ENCODE measurements at regions of chr18 and their contacts with region 1.

Region 1: DNA sequence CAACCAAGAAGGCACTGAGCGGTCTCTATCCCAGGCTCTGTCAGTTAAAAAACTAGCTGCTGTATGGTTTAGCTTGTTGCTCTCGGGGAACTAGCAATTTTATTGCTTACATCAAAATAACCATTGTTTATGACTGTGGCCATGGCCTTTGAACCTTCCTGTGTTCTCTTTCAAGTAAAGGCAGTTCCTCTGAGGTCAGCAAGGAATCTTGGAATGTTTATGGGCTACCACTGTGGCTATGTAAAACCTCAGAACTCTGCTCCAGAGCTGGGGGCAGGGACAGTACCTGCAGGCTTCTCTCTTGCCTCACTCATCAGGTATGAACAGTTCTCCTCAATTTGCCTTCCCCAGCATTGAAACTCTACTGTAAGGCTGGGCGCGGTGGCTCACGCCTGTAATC is 416.0 kb upstream of the NETO1 start:
- DNase-seq: peak; percentile 97
- ATAC-seq: peak; percentile 68
- H3K4me3 ChIP-seq: peak overlapping the region; percentile 57
- H3K27ac ChIP-seq: peak overlapping the region; percentile 99
- H3K4me1 ChIP-seq: peaks cover 49% of the 10 kb centered on the region
- H3K27me3 ChIP-seq: no peaks in the 10 kb centered on the region
- CTCF ChIP-seq: no peak

Region 2: DNA sequence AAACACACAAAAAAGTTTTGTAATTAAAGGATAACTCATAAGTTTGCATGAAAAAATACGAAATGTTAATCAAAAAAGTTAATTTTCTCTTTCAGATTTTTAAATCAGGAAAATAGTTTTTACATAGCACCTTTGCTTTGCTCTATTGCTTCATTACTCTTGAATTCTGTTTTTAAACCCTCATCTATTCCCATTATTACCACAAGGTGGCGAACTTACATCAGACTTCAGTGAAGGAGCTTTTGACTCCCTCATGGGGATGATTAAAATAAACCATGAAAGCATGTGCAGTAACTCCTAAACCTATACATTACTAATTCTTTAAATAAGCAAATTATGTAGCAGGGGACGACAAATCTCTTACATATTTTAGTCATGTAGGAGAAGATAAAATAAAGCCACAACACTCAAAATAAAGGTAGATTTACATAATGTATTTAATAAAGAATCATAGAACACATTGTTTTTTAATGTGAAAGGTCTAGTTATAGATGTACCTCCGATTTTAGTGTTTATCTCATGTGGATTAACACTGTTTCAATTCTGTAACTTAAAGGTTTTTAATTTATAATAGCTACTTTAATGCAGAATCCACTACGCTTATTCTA is 521.2 kb before region 1 on chr18:
- CTCF ChIA-PET with region 1: no interaction called
- POLR2A ChIA-PET with region 1: no interaction called
- intact Hi-C with region 1: loop called (anchors 2 kb)
- DNase-seq: peak; percentile 84
- ATAC-seq: peak; percentile 61
- H3K4me3 ChIP-seq: no peak overlapping the region
- H3K27ac ChIP-seq: no peak overlapping the region
- H3K4me1 ChIP-seq: no peaks in the 10 kb centered on the region
- H3K27me3 ChIP-seq: no peaks in the 10 kb centered on the region
- CTCF ChIP-seq: peak; percentile 83

Region 3: DNA sequence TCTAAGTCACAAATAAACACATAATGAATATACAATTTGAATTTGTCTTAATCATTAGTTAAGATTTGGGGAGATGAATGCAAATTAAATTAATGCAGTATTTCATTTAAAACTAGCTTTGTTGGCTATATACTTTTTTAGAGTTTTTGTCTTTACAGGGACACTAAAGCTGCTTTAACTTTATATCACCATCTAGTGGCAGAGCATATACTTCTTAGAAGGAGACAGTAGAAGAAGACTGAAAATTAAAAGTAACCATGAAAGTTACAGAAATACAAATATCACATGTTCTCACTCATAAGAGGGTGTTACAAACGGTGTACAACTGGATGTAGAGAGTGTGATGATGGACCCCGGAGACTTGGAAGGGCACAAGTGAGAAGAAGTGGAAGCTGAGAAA is 147.7 kb before region 1 on chr18:
- CTCF ChIA-PET with region 1: interaction called, 4 read pairs
- POLR2A ChIA-PET with region 1: no interaction called
- intact Hi-C with region 1: loop called (anchors 2 kb)
- DNase-seq: peak; percentile 67
- ATAC-seq: peak; percentile 64
- H3K4me3 ChIP-seq: no peak overlapping the region
- H3K27ac ChIP-seq: no peak overlapping the region
- H3K4me1 ChIP-seq: no peaks in the 10 kb centered on the region
- H3K27me3 ChIP-seq: no peaks in the 10 kb centered on the region
- CTCF ChIP-seq: peak; percentile 81

Region 4: GRCh38 chr18:73296678-73297077 is 12.9 kb after region 1 on chr18:
- CTCF ChIA-PET with region 1: no interaction called
- POLR2A ChIA-PET with region 1: no interaction called
- intact Hi-C with region 1: loop called (anchors 2 kb)
- DNase-seq: peak; percentile 90
- ATAC-seq: peak; percentile 91
- H3K4me3 ChIP-seq: no peak overlapping the region
- H3K27ac ChIP-seq: peak overlapping the region; percentile 49
- H3K4me1 ChIP-seq: peaks cover 18% of the 10 kb centered on the region
- H3K27me3 ChIP-seq: no peaks in the 10 kb centered on the region
- CTCF ChIP-seq: no peak

Region 5: DNA sequence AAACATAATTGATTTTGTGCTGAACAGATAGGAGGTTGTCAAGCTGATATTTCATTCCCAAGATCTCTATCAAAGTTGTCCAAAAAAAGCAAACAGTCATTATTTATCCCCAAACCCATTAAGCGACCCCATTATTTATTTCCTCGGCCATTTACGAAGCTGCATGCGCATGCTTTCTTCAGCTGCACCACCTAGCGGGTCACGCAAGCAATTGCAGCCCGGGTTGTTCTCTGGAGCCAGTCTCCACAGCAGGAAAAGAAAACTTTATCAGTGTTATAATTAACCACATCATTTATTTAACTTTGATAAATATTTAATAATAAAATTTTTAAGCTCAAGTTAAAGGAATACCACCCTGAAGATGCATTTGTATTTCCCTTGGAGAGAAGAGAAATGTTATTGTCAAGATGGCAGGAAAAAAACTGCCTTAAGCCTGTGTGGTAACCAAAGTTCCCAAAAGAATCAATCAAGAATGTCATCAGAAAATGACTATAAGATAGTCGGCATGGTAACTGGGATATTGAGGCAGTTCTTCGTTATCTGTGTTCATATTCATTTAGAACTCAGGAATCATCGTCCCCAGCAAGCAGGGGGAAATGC is 559.1 kb after region 1 on chr18:
- CTCF ChIA-PET with region 1: no interaction called
- POLR2A ChIA-PET with region 1: no interaction called
- intact Hi-C with region 1: loop called (anchors 10 kb)
- DNase-seq: peak; percentile 71
- ATAC-seq: peak; percentile 64
- H3K4me3 ChIP-seq: peak overlapping the region; percentile 55; the same call in 1 of the 2 replicates
- H3K27ac ChIP-seq: no peak overlapping the region
- H3K4me1 ChIP-seq: peaks cover 9% of the 10 kb centered on the region
- H3K27me3 ChIP-seq: no peaks in the 10 kb centered on the region
- CTCF ChIP-seq: peak; percentile 90

Measured in PC-3 (cell line).